CD4-positive, alpha-beta T cell (primary cell): ENCODE measurements at regions of chr22 and their contacts with region 1.

Region 1: DNA sequence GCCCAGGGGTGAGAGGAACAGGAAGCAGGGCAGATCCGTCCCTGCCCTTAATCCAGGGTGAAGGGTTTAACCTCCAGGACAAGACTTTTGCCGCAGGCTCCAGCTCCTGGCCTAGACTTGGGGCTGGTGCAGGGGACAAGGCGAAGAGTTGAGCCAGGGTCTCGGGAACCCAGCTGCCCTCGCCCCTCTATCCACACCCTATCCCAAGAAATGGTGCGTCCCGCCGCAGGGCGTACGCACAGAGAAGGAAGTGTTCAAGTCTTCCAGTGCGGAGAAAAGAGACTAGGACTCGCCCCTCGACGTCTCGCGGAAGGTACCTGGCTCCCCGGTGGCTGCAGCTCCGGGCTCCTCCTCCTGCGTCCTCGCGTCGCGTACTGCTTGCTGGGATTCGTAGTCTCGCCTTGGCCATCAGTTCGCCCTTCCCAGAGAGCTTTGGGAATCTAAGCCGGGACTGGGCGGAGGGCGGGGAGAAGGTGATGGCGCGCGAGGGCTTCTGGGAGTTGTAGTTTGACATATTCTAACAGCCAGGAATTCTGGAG is at the start of gene ZMAT5:
- DNase-seq: peak; percentile 81 to 97 (median 88)
- ATAC-seq: peak; percentile 96
- H3K4me3 ChIP-seq: peak within 1 kb of the TSS; percentile 83
- H3K4me3 Mint-ChIP-seq: peak within 1 kb of the TSS; percentile 98
- H3K27ac ChIP-seq: peak within 1 kb of the TSS; percentile 73 to 78
- H3K27ac Mint-ChIP-seq: peak within 1 kb of the TSS; percentile 88
- H3K4me1 ChIP-seq: peaks cover 30% of the 10 kb centered on the region
- H3K4me1 Mint-ChIP-seq: peaks cover 34% of the 10 kb centered on the region
- H3K27me3 ChIP-seq: no peaks in the 10 kb centered on the region
- H3K27me3 Mint-ChIP-seq: no peaks in the 10 kb centered on the region
- CTCF ChIP-seq: no peak
- total RNA-seq, gene ZMAT5: 5.6 to 6.6 TPM

Region 2: GRCh38 chr22:28800308-28801077 is 966.2 kb before region 1 on chr22 and contains the start of gene XBP1:
- CTCF ChIA-PET with region 1: no interaction called
- POLR2A ChIA-PET with region 1: no interaction called
- intact Hi-C with region 1: loop called in 1 of 2 experiments (anchors 5 kb)
- DNase-seq: peak; percentile 77 to 96 (median 86)
- ATAC-seq: peak; percentile 91
- H3K4me3 ChIP-seq: peak within 1 kb of the TSS; percentile 99
- H3K4me3 Mint-ChIP-seq: peak within 1 kb of the TSS; percentile 97
- H3K27ac ChIP-seq: peak within 1 kb of the TSS; percentile 92 to 93
- H3K27ac Mint-ChIP-seq: peak within 1 kb of the TSS; percentile 96
- H3K4me1 ChIP-seq: peaks cover 44% of the 10 kb centered on the region
- H3K4me1 Mint-ChIP-seq: peaks cover 60% of the 10 kb centered on the region
- H3K27me3 ChIP-seq: no peaks in the 10 kb centered on the region
- H3K27me3 Mint-ChIP-seq: no peaks in the 10 kb centered on the region
- CTCF ChIP-seq: no peak
- total RNA-seq, gene XBP1: 180 to 190 TPM

Region 3: GRCh38 chr22:29387921-29388758 is 378.6 kb before region 1 on chr22 and contains the start of gene AP1B1:
- CTCF ChIA-PET with region 1: no interaction called
- POLR2A ChIA-PET with region 1: no interaction called
- intact Hi-C with region 1: loop called in 1 of 2 experiments (anchors 10 kb)
- DNase-seq: peak; percentile 79 to 96 (median 92)
- ATAC-seq: peak; percentile 91
- H3K4me3 ChIP-seq: peak within 1 kb of the TSS; percentile 91
- H3K4me3 Mint-ChIP-seq: peak within 1 kb of the TSS; percentile 96
- H3K27ac ChIP-seq: peak within 1 kb of the TSS; percentile 58 to 80
- H3K27ac Mint-ChIP-seq: peak within 1 kb of the TSS; percentile 85
- H3K4me1 ChIP-seq: peaks cover 48% of the 10 kb centered on the region
- H3K4me1 Mint-ChIP-seq: peaks cover 52% of the 10 kb centered on the region
- H3K27me3 ChIP-seq: no peaks in the 10 kb centered on the region
- H3K27me3 Mint-ChIP-seq: no peaks in the 10 kb centered on the region
- CTCF ChIP-seq: no peak
- total RNA-seq, gene AP1B1: 25.6 to 26.4 TPM

Region 4: GRCh38 chr22:29580200-29580810 is 186.4 kb before region 1 on chr22:
- CTCF ChIA-PET with region 1: no interaction called
- POLR2A ChIA-PET with region 1: no interaction called
- intact Hi-C with region 1: loop called in 1 of 2 experiments (anchors 2 kb)
- DNase-seq: peak in 2 of 14 experiments; percentile 17 to 33
- ATAC-seq: no peak
- H3K4me3 ChIP-seq: peak overlapping the region; percentile 70
- H3K4me3 Mint-ChIP-seq: peak overlapping the region; percentile 95
- H3K27ac ChIP-seq: peak overlapping the region; percentile 34 to 46
- H3K27ac Mint-ChIP-seq: peak overlapping the region; percentile 86
- H3K4me1 ChIP-seq: peaks cover 19% of the 10 kb centered on the region
- H3K4me1 Mint-ChIP-seq: peaks cover 18% of the 10 kb centered on the region
- H3K27me3 ChIP-seq: no peaks in the 10 kb centered on the region
- H3K27me3 Mint-ChIP-seq: no peaks in the 10 kb centered on the region
- CTCF ChIP-seq: no peak

Region 5: GRCh38 chr22:29837780-29838598 is 71.3 kb after region 1 on chr22 and contains the start of gene ASCC2:
- CTCF ChIA-PET with region 1: no interaction called
- POLR2A ChIA-PET with region 1: interaction called, 14 read pairs
- intact Hi-C with region 1: loop called (anchors 1 kb)
- DNase-seq: peak; percentile 97 to 100 (median 99)
- ATAC-seq: peak; percentile 97
- H3K4me3 ChIP-seq: peak within 1 kb of the TSS; percentile 72
- H3K4me3 Mint-ChIP-seq: peak within 1 kb of the TSS; percentile 94
- H3K27ac ChIP-seq: peak within 1 kb of the TSS; percentile 75 to 88
- H3K27ac Mint-ChIP-seq: peak within 1 kb of the TSS; percentile 94
- H3K4me1 ChIP-seq: peaks cover 27% of the 10 kb centered on the region
- H3K4me1 Mint-ChIP-seq: peaks cover 50% of the 10 kb centered on the region
- H3K27me3 ChIP-seq: no peaks in the 10 kb centered on the region
- H3K27me3 Mint-ChIP-seq: no peaks in the 10 kb centered on the region
- CTCF ChIP-seq: no peak
- total RNA-seq, gene ASCC2: 67.1 to 68.3 TPM

Region 6: GRCh38 chr22:30580896-30581295 is 814.2 kb after region 1 on chr22:
- CTCF ChIA-PET with region 1: no interaction called
- POLR2A ChIA-PET with region 1: no interaction called
- intact Hi-C with region 1: no loop called
- DNase-seq: no peak
- ATAC-seq: no peak
- H3K4me3 ChIP-seq: no peak overlapping the region
- H3K4me3 Mint-ChIP-seq: no peak overlapping the region
- H3K27ac ChIP-seq: no peak overlapping the region
- H3K27ac Mint-ChIP-seq: no peak overlapping the region
- H3K4me1 ChIP-seq: no peaks in the 10 kb centered on the region
- H3K4me1 Mint-ChIP-seq: no peaks in the 10 kb centered on the region
- H3K27me3 ChIP-seq: no peaks in the 10 kb centered on the region
- H3K27me3 Mint-ChIP-seq: no peaks in the 10 kb centered on the region
- CTCF ChIP-seq: no peak

Region 7: GRCh38 chr22:30591588-30592359 is 825.1 kb after region 1 on chr22 and contains the start of gene PES1:
- CTCF ChIA-PET with region 1: no interaction called
- POLR2A ChIA-PET with region 1: no interaction called
- intact Hi-C with region 1: loop called in 1 of 2 experiments (anchors 2 kb)
- DNase-seq: peak; percentile 91 to 99 (median 94)
- ATAC-seq: peak; percentile 96
- H3K4me3 ChIP-seq: peak within 1 kb of the TSS; percentile 96
- H3K4me3 Mint-ChIP-seq: no peak within 1 kb of the TSS
- H3K27ac ChIP-seq: peak within 1 kb of the TSS; percentile 85 to 97
- H3K27ac Mint-ChIP-seq: no peak within 1 kb of the TSS
- H3K4me1 ChIP-seq: peaks cover 16% of the 10 kb centered on the region
- H3K4me1 Mint-ChIP-seq: no peaks in the 10 kb centered on the region
- H3K27me3 ChIP-seq: no peaks in the 10 kb centered on the region
- H3K27me3 Mint-ChIP-seq: no peaks in the 10 kb centered on the region
- CTCF ChIP-seq: no peak
- total RNA-seq, gene PES1: 28.4 to 30.5 TPM